ENCODE measurements at regions of chr2 and their contacts with region 1.

Region 1: GRCh38 chr2:204691911-204692510 is 146.7 kb downstream of the PARD3B start:
- DNase-seq: peak; percentile 90
- H3K4me3 ChIP-seq: no peak overlapping the region
- H3K27ac ChIP-seq: peak overlapping the region; percentile 36
- H3K4me1 ChIP-seq: peaks cover 18% of the 10 kb centered on the region
- H3K27me3 ChIP-seq: no peaks in the 10 kb centered on the region
- CTCF ChIP-seq: peak; percentile 68 to 72
- POLR2A ChIP-seq: no peak

Region 2: GRCh38 chr2:204260162-204260877 is 431.7 kb before region 1 on chr2:
- CTCF ChIA-PET with region 1: interaction called, 37 read pairs
- POLR2A ChIA-PET with region 1: no interaction called
- dilution Hi-C with region 1: no loop called
- intact Hi-C with region 1: loop called (anchors 1 kb)
- DNase-seq: peak; percentile 86
- H3K4me3 ChIP-seq: no peak overlapping the region
- H3K27ac ChIP-seq: no peak overlapping the region
- H3K4me1 ChIP-seq: peaks cover 6% of the 10 kb centered on the region
- H3K27me3 ChIP-seq: peaks cover 0 to 2% of the 10 kb centered on the region in 2 experiments
- CTCF ChIP-seq: peak; percentile 63 to 72
- POLR2A ChIP-seq: no peak

Region 3: GRCh38 chr2:204545023-204545860 is 146.8 kb before region 1 on chr2 and contains the start of gene PARD3B:
- CTCF ChIA-PET with region 1: interaction called, 16 read pairs
- POLR2A ChIA-PET with region 1: no interaction called
- dilution Hi-C with region 1: no loop called
- intact Hi-C with region 1: loop called (anchors 1 kb)
- DNase-seq: peak; percentile 74
- H3K4me3 ChIP-seq: peak within 1 kb of the TSS; percentile 78 to 90 (median 87)
- H3K27ac ChIP-seq: peak within 1 kb of the TSS; percentile 67
- H3K4me1 ChIP-seq: peaks cover 22% of the 10 kb centered on the region
- H3K27me3 ChIP-seq: no peaks in the 10 kb centered on the region
- CTCF ChIP-seq: no peak
- POLR2A ChIP-seq: no peak
- total RNA-seq, gene PARD3B: 17.7 and 30.9 TPM in 2 replicates

Region 4: DNA sequence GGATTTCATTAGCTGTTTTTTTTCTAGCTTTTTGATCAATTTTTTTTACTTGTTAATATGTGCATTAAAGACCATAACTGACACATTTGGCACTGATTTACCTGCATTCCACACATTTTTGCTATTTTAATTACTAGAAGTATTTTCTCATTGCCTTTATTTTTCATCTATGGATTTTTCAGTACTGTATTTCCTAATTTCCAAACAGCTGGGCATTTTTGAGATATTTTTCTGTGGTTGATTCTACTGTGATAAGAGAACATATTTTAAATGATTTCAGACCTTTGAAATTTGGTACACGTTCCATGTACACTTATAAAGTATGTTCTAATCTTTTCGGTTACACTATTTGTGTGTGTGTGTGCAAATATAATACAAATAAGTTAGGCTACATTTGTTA is 11.4 kb before region 1 on chr2:
- CTCF ChIA-PET with region 1: interaction called, 13 read pairs
- POLR2A ChIA-PET with region 1: no interaction called
- dilution Hi-C with region 1: no loop called
- intact Hi-C with region 1: no loop called
- DNase-seq: no peak
- H3K4me3 ChIP-seq: no peak overlapping the region
- H3K27ac ChIP-seq: no peak overlapping the region
- H3K4me1 ChIP-seq: no peaks in the 10 kb centered on the region
- H3K27me3 ChIP-seq: no peaks in the 10 kb centered on the region
- CTCF ChIP-seq: no peak
- POLR2A ChIP-seq: no peak

Region 5: DNA sequence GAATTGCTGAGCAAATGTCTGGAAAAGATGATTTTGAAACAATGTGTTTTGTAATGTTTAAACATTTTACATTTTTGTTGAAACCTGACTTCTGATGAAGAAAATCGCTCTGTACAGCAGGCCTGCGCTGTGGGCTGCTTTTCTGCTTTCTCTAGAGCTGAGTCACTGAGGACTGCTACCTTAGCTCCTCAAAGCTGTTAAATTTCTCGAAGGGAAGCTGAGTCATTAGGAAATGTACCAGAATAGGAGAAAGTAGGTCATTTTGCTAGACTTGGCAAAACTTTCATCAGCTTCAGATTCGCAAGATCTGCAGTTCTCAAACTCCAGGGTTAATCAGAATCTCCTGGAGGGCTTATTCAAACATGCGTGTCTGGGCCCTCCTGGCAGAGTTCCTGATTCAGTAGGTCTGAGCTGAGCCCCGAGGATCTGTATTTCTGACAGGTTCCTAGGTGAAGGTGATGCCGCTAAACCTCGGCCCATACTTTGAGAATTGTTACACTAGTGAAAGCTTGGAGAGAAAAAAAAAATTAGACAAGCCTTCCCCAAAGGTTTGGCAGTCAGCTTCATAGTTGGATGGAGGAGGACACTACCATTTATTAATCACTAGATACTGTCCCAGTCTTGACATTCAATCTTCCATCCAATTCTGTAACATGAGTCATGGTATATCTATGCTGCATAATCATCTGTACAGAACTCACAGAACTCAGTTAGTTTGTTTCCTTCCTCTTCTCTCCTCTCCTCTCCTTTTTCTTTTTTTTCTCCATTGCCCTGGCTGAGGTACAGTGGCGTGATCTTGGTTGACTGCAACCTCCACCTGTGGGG is 150.9 kb after region 1 on chr2:
- CTCF ChIA-PET with region 1: interaction called, 6 read pairs
- POLR2A ChIA-PET with region 1: no interaction called
- dilution Hi-C with region 1: no loop called
- intact Hi-C with region 1: loop called (anchors 5 kb)
- DNase-seq: peak; percentile 92
- H3K4me3 ChIP-seq: peak overlapping the region in 1 of 3 experiments; percentile 15
- H3K27ac ChIP-seq: peak overlapping the region; percentile 84
- H3K4me1 ChIP-seq: peaks cover 25% of the 10 kb centered on the region
- H3K27me3 ChIP-seq: no peaks in the 10 kb centered on the region
- CTCF ChIP-seq: no peak
- POLR2A ChIP-seq: no peak

Measured in endothelial cell of umbilical vein (primary cell).